Dorsolateral prefrontal cortex (tissue), 120 donors: ENCODE measurements at regions of chr2 and their contacts with region 1.

Region 1: GRCh38 chr2:72993147-72993932 is 76.0 kb downstream of the EMX1 start:
- DNase-seq: peak in 3 of 10 donors; percentile 10 to 27 (median 24)
- H3K4me3 ChIP-seq: no peak overlapping the region
- H3K27ac ChIP-seq: peak overlapping the region in 13 of 59 donors; percentile 3 to 73 (median 38)
- H3K27me3 ChIP-seq: no peaks in the 10 kb centered on the region
- CTCF ChIP-seq: peak; percentile 32 to 95 (median 83)

Region 2: GRCh38 chr2:73071360-73072133 is 78.2 kb after region 1 on chr2 and contains the start of gene SFXN5:
- intact Hi-C with region 1: loop called (anchors 5 kb)
- DNase-seq: peak; percentile 95 to 99 (median 98)
- H3K4me3 ChIP-seq: peak within 1 kb of the TSS; percentile 69 to 100 (median 93)
- H3K27ac ChIP-seq: peak within 1 kb of the TSS; percentile 72 to 99 (median 97)
- H3K27me3 ChIP-seq: no peaks in the 10 kb centered on the region
- CTCF ChIP-seq: peak in 34 of 56 donors; percentile 6 to 61 (median 33)
- total RNA-seq, gene SFXN5: 82.7 to 370 (median 148) TPM

Region 3: GRCh38 chr2:73156539-73157124 is 163.3 kb after region 1 on chr2:
- intact Hi-C with region 1: loop called (anchors 5 to 10 kb)
- DNase-seq: peak; percentile 54 to 86 (median 66)
- H3K4me3 ChIP-seq: peak overlapping the region in 30 of 59 donors; percentile 0 to 45 (median 24)
- H3K27ac ChIP-seq: no peak overlapping the region
- H3K27me3 ChIP-seq: peaks cover 0 to 14% (median 0%) of the 10 kb centered on the region in 45 donors
- CTCF ChIP-seq: peak; percentile 18 to 91 (median 76)

Region 4: GRCh38 chr2:73163483-73164367 is 170.4 kb after region 1 on chr2:
- intact Hi-C with region 1: loop called (anchors 5 to 10 kb)
- DNase-seq: peak; percentile 59 to 83 (median 74)
- H3K4me3 ChIP-seq: no peak overlapping the region
- H3K27ac ChIP-seq: no peak overlapping the region
- H3K27me3 ChIP-seq: no peaks in the 10 kb centered on the region
- CTCF ChIP-seq: peak; percentile 76 to 95 (median 89)

Region 5: GRCh38 chr2:73176881-73177644 is 183.7 kb after region 1 on chr2:
- intact Hi-C with region 1: loop called (anchors 2 to 5 kb)
- DNase-seq: peak; percentile 82 to 92 (median 90)
- H3K4me3 ChIP-seq: peak overlapping the region; percentile 33 to 75 (median 64)
- H3K27ac ChIP-seq: peak overlapping the region in 23 of 59 donors; percentile 6 to 76 (median 52)
- H3K27me3 ChIP-seq: peaks cover 0 to 42% (median 0%) of the 10 kb centered on the region in 45 donors
- CTCF ChIP-seq: peak; percentile 85 to 100 (median 99)